ENCODE measurements at regions of chr4 and their contacts with region 1.

Region 1: DNA sequence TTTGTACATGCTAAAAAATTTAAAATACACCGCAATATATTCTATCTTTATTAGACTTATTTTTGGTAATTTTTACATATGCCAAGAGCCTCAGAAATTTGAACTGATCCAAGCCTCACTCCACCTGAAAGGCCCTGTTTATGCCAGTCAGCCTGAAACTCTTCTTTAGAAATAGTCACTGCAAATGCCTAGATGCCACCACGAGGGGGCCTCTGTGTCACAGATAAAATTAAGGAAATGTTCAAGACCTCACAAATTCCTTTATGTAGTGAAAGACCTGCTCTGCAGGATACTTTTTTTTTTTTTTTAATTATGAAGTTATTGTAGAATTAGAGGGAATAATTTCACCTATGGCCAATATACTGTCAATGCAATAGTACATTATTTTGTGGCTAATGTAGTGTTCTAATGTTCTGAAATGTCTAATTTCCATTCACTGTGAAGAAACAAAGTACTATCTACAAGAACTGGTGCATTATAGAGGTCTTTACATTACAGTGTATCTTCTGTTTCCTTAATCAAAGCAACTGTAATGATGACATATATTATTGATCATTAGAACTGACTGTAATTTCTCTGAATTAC is 69.8 kb downstream of the DTHD1 start:
- DNase-seq: peak; percentile 63 to 87
- ATAC-seq: peak; percentile 70 to 86 (median 86)
- H3K4me3 ChIP-seq: no peak overlapping the region
- H3K4me3 Mint-ChIP-seq: no peak overlapping the region
- H3K27ac ChIP-seq: no peak overlapping the region
- H3K27ac Mint-ChIP-seq: peak overlapping the region in 1 of 2 donors; percentile 41
- H3K4me1 ChIP-seq: no peaks in the 10 kb centered on the region
- H3K4me1 Mint-ChIP-seq: peaks cover 5 to 12% of the 10 kb centered on the region in 2 donors
- H3K27me3 ChIP-seq: no peaks in the 10 kb centered on the region
- H3K27me3 Mint-ChIP-seq: no peaks in the 10 kb centered on the region
- CTCF ChIP-seq: peak; percentile 90

Region 2: DNA sequence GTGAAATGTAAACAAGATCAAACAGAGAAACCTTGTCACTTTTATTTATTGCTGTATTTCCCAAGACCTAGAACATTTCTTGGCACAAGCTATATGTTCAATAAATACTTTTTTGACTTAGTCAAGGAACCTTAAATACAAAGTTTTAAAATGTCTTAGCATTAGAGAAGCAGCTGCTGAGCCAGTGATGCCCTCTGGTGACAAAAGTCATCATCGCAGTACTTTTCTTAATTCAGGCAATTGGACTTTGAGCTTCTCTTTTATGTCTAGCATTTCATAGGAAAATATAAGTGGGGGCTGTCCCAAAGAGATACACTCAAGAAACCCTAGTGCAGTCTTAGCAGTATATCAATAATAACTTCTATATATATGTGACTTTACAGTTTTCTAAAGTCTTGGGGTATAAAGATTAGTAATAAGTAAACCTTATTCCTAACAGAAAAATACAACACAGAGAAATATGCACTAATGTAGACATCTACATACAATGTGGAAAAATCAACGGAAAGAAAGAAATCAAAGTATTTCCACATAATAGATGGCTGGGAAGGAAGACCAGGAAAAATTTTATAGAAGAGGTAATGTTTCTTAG is 48.7 kb after region 1 on chr4:
- intact Hi-C with region 1: loop called (anchors 1 kb)
- DNase-seq: peak in 1 of 2 donors; percentile 80
- ATAC-seq: peak in 2 of 3 donors; percentile 61 to 65
- H3K4me3 ChIP-seq: no peak overlapping the region
- H3K4me3 Mint-ChIP-seq: no peak overlapping the region
- H3K27ac ChIP-seq: no peak overlapping the region
- H3K27ac Mint-ChIP-seq: no peak overlapping the region
- H3K4me1 ChIP-seq: no peaks in the 10 kb centered on the region
- H3K4me1 Mint-ChIP-seq: no peaks in the 10 kb centered on the region
- H3K27me3 ChIP-seq: no peaks in the 10 kb centered on the region
- H3K27me3 Mint-ChIP-seq: peaks cover 17 to 41% of the 10 kb centered on the region in 2 donors
- CTCF ChIP-seq: peak; percentile 94